Activated B cell treated with CpG ODN at 0.5 μM for 24 hours (primary cell): ENCODE measurements at regions of chr15 and their contacts with region 1.

Region 1: DNA sequence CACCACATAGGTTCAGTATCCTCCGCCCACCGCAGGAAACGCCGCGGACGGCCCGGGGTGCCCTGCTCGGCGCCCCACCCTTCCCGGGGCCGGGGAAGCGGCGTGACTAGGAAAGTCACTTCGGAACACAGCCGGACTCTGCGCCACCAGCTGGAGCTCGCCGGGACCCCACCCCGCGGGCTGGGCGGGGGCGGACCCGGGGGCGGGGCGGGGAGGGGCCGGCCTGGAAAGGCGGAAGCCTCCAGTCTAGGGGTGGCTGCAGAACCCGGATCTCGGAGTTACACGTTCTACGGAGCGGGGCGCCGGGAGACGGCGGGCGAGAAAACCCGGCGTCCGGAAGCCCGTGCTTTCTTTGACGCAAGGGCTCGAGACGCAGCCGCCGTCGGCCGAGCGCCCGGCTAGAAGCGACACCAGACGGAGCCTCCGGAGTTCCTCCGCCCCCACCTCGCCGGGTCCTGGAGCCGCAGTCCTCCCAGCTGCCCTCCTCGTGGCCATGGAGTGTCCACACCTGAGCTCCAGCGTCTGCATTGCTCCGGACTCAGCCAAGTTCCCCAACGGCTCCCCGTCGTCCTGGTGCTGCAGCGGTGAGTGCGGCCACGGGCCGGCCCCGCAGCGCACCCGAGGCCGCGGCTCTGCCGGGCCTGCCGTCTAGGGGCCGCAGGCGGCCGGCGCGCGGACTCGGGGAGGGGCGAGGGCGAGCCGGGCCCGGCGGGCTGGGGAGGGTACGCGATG is at the start of gene USP3:
- DNase-seq: peak; percentile 93
- ATAC-seq: peak; percentile 68
- H3K4me3 Mint-ChIP-seq: peak within 1 kb of the TSS; percentile 93
- H3K27ac Mint-ChIP-seq: peak within 1 kb of the TSS; percentile 98
- H3K4me1 Mint-ChIP-seq: peaks cover 81% of the 10 kb centered on the region
- H3K27me3 Mint-ChIP-seq: no peaks in the 10 kb centered on the region
- CTCF ChIP-seq: no peak
- total RNA-seq, gene USP3: 92.7 and 110 TPM in 2 replicates

Region 2: GRCh38 chr15:63122002-63122893 is 382.2 kb before region 1 on chr15:
- CTCF ChIA-PET with region 1: no interaction called
- POLR2A ChIA-PET with region 1: no interaction called
- intact Hi-C with region 1: loop called (anchors 10 kb)
- DNase-seq: peak; percentile 77
- ATAC-seq: peak; percentile 88
- H3K4me3 Mint-ChIP-seq: peak overlapping the region; percentile 86
- H3K27ac Mint-ChIP-seq: peak overlapping the region; percentile 86
- H3K4me1 Mint-ChIP-seq: peaks cover 15% of the 10 kb centered on the region
- H3K27me3 Mint-ChIP-seq: no peaks in the 10 kb centered on the region
- CTCF ChIP-seq: no peak

Region 3: GRCh38 chr15:63473999-63474809 is 30.2 kb before region 1 on chr15:
- CTCF ChIA-PET with region 1: interaction called, 94 read pairs
- POLR2A ChIA-PET with region 1: interaction called, 509 read pairs
- intact Hi-C with region 1: loop called (anchors 1 kb)
- DNase-seq: peak; percentile 59
- ATAC-seq: peak; percentile 64
- H3K4me3 Mint-ChIP-seq: peak overlapping the region; percentile 83
- H3K27ac Mint-ChIP-seq: peak overlapping the region; percentile 99
- H3K4me1 Mint-ChIP-seq: peaks cover 75% of the 10 kb centered on the region
- H3K27me3 Mint-ChIP-seq: no peaks in the 10 kb centered on the region
- CTCF ChIP-seq: no peak

Region 4: GRCh38 chr15:63514531-63514943 is 10.1 kb after region 1 on chr15:
- CTCF ChIA-PET with region 1: interaction called, 4 read pairs
- POLR2A ChIA-PET with region 1: interaction called, 20 read pairs
- intact Hi-C with region 1: loop called (anchors 1 kb)
- DNase-seq: no peak
- ATAC-seq: no peak
- H3K4me3 Mint-ChIP-seq: no peak overlapping the region
- H3K27ac Mint-ChIP-seq: peak overlapping the region; percentile 66
- H3K4me1 Mint-ChIP-seq: peaks cover 92% of the 10 kb centered on the region
- H3K27me3 Mint-ChIP-seq: no peaks in the 10 kb centered on the region
- CTCF ChIP-seq: no peak

Region 5: DNA sequence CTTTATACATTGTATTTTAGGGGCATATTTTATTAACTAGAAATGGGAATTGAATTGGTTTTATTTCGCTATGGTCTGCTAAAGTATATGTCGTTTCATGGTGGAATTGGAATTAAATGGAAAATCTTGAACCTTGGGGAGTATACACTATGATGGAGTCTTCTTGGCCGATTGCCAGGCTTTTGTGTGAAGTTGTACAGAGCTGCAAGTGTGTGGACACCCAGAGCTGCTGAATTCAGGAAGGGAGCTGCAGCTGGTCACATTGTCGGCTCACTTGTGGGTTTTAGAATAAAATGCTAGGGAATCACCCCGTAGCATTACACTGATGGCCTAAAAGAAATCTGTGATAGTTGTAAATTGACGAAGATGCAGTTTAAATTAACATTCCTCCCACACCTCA is 35.1 kb after region 1 on chr15:
- CTCF ChIA-PET with region 1: interaction called, 7 read pairs
- POLR2A ChIA-PET with region 1: interaction called, 34 read pairs
- intact Hi-C with region 1: loop called (anchors 5 kb)
- DNase-seq: no peak
- ATAC-seq: no peak
- H3K4me3 Mint-ChIP-seq: no peak overlapping the region
- H3K27ac Mint-ChIP-seq: peak overlapping the region; percentile 79
- H3K4me1 Mint-ChIP-seq: peaks cover 83% of the 10 kb centered on the region
- H3K27me3 Mint-ChIP-seq: no peaks in the 10 kb centered on the region
- CTCF ChIP-seq: no peak

Region 6: DNA sequence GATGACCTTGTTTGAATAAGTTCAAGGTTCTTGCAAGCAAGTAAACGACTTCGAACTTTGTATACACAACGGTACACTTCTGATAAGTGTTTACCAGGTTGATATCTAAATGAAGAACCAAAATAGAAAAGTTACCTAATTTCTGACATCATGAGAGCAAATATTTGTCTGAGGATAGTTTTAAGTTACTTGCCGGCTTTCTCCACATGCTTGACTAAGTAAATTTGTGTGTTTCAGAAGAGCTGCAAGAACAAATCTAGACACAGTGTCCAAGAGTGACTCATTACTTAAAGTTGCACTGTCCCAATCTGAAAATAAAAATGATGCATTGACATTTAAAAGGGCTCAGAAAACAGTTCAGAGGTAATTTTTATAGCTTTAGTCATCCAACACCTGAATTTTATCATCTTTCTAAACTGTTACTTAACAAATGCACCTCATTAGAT is 214.2 kb after region 1 on chr15:
- CTCF ChIA-PET with region 1: no interaction called
- POLR2A ChIA-PET with region 1: no interaction called
- intact Hi-C with region 1: no loop called
- DNase-seq: no peak
- ATAC-seq: no peak
- H3K4me3 Mint-ChIP-seq: no peak overlapping the region
- H3K27ac Mint-ChIP-seq: no peak overlapping the region
- H3K4me1 Mint-ChIP-seq: peaks cover 13% of the 10 kb centered on the region
- H3K27me3 Mint-ChIP-seq: no peaks in the 10 kb centered on the region
- CTCF ChIP-seq: no peak

Region 7: DNA sequence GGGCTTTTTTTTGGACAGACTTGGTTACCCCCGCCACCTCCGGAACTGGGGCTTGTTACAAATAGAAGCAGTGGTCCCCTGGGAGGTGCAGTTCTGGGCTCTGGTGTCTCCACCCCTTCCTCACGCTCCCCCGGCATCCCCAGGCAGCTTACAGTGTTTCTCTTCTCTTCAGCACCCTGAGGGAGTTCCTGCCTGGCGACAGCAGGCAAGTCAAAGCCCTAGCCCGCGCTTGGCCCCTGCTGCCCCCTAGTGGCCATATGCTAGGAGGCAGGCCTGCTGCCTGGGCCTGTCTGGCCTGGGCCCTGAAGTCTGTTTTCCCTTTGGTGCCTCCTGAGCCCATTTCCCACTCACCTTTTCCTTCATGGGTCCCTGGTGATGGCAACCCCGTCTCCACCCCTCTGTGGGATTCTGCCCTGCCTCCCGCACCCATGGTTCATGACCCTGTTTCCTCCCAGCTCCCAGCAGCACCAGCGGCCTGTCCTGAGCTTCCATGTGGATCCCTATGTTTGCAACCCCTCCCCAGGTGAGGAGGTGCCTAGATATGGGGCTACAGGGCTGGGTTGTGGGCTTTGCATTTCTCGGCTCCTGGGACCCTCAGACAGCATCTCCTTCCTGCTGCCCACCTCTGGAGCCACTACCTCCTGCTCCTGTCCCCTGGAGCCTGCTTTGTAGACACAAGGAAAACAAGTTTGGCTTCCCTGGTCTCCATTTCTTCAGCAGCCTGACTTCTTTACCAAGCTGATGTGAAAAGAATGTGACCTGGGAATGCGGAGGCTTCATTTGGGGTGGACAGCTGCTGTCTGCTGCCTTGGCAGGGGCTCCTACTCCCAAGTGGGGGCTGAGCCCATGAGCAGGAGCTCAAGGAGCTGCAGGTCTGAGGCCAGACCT is 649.3 kb after region 1 on chr15:
- CTCF ChIA-PET with region 1: no interaction called
- POLR2A ChIA-PET with region 1: no interaction called
- intact Hi-C with region 1: loop called (anchors 1 kb)
- DNase-seq: peak; percentile 92
- ATAC-seq: peak; percentile 80
- H3K4me3 Mint-ChIP-seq: peak overlapping the region; percentile 86
- H3K27ac Mint-ChIP-seq: peak overlapping the region; percentile 91
- H3K4me1 Mint-ChIP-seq: peaks cover 69% of the 10 kb centered on the region
- H3K27me3 Mint-ChIP-seq: no peaks in the 10 kb centered on the region
- CTCF ChIP-seq: peak; percentile 61